PC-9 (cell line): ENCODE measurements at regions of chr4 and their contacts with region 1.

Region 1: DNA sequence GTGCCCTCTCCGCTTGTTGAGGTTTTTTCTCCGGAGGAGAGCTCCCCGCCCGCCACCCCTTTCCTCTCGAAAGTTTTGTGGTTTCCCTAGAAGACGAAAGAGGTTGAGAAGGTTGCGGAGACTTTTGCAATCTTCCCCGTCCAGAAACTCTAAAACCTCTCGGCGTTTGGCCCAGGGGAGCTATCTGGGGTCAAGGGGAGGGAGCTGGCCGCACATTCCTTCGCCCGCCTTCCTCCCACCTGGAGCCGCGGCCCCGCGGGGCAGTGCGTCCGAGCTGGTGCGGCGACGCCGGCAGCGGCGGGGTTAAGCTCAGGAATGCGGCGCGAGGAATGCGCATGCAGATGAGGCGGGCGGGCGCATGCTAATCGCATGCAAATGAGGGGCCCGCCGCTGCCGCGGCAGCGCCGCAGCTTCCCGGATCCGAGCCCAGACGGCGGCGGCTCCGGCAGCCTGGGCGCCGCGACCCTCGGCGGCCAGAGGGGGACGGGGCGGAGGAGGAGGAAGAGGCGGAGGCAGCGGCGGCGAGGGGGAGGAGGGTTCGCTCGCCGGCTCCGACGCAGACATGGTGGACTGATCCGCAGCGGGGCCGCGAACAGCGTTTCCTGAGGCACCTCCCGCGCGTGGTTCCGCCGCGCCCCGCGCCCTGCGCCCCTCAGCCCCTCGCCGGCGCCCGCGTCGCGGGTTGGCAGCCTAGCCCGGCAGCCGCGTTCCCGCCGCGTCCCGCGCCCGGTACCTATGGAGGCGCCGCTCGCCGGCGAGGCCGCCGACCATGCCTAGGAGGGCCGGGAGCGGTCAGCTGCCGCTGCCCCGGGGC is at the start of gene WWC2:
- DNase-seq: peak; percentile 77 to 93
- H3K4me3 ChIP-seq: peak within 1 kb of the TSS; percentile 67
- H3K27ac ChIP-seq: peak within 1 kb of the TSS; percentile 89
- H3K4me1 ChIP-seq: peaks cover 35% of the 10 kb centered on the region
- H3K27me3 ChIP-seq: no peaks in the 10 kb centered on the region
- CTCF ChIP-seq: no peak
- total RNA-seq, gene WWC2: 42.3 and 46.5 TPM in 2 replicates

Region 2: GRCh38 chr4:183074296-183074990 is 24.5 kb before region 1 on chr4:
- CTCF ChIA-PET with region 1: interaction called, 13 read pairs
- POLR2A ChIA-PET with region 1: no interaction called
- intact Hi-C with region 1: loop called (anchors 2 kb)
- DNase-seq: peak in 1 of 2 experiments; percentile 68
- H3K4me3 ChIP-seq: no peak overlapping the region
- H3K27ac ChIP-seq: no peak overlapping the region
- H3K4me1 ChIP-seq: 0 out of 2 replicates have a peak, but pooled peaks cover 8% of the 10 kb centered on the region
- H3K27me3 ChIP-seq: no peaks in the 10 kb centered on the region
- CTCF ChIP-seq: no peak

Region 3: GRCh38 chr4:183136855-183137254 is 37.9 kb after region 1 on chr4:
- CTCF ChIA-PET with region 1: no interaction called
- POLR2A ChIA-PET with region 1: no interaction called
- intact Hi-C with region 1: loop called (anchors 5 kb)
- DNase-seq: no peak
- H3K4me3 ChIP-seq: no peak overlapping the region
- H3K27ac ChIP-seq: no peak overlapping the region
- H3K4me1 ChIP-seq: peaks cover 2% of the 10 kb centered on the region; the same call in 1 of the 2 replicates
- H3K27me3 ChIP-seq: no peaks in the 10 kb centered on the region
- CTCF ChIP-seq: no peak

Region 4: GRCh38 chr4:183182873-183183725 is 84.2 kb after region 1 on chr4:
- CTCF ChIA-PET with region 1: no interaction called
- POLR2A ChIA-PET with region 1: no interaction called
- intact Hi-C with region 1: loop called (anchors 5 kb)
- DNase-seq: peak; percentile 73 to 84
- H3K4me3 ChIP-seq: no peak overlapping the region
- H3K27ac ChIP-seq: 0 out of 2 replicates have a peak overlapping the region, but pooled peaks have one; percentile 29
- H3K4me1 ChIP-seq: peaks cover 15% of the 10 kb centered on the region; the same call in 1 of the 2 replicates
- H3K27me3 ChIP-seq: no peaks in the 10 kb centered on the region
- CTCF ChIP-seq: no peak

Region 5: GRCh38 chr4:183241322-183241640 is 142.4 kb after region 1 on chr4:
- CTCF ChIA-PET with region 1: no interaction called
- POLR2A ChIA-PET with region 1: interaction called, 4 read pairs
- intact Hi-C with region 1: loop called (anchors 1 kb)
- DNase-seq: peak; percentile 51 to 87
- H3K4me3 ChIP-seq: no peak overlapping the region
- H3K27ac ChIP-seq: peak overlapping the region; percentile 57
- H3K4me1 ChIP-seq: peaks cover 28% of the 10 kb centered on the region
- H3K27me3 ChIP-seq: no peaks in the 10 kb centered on the region
- CTCF ChIP-seq: no peak